ENCODE measurements at regions of chr4 and their contacts with region 1.

Region 1: DNA sequence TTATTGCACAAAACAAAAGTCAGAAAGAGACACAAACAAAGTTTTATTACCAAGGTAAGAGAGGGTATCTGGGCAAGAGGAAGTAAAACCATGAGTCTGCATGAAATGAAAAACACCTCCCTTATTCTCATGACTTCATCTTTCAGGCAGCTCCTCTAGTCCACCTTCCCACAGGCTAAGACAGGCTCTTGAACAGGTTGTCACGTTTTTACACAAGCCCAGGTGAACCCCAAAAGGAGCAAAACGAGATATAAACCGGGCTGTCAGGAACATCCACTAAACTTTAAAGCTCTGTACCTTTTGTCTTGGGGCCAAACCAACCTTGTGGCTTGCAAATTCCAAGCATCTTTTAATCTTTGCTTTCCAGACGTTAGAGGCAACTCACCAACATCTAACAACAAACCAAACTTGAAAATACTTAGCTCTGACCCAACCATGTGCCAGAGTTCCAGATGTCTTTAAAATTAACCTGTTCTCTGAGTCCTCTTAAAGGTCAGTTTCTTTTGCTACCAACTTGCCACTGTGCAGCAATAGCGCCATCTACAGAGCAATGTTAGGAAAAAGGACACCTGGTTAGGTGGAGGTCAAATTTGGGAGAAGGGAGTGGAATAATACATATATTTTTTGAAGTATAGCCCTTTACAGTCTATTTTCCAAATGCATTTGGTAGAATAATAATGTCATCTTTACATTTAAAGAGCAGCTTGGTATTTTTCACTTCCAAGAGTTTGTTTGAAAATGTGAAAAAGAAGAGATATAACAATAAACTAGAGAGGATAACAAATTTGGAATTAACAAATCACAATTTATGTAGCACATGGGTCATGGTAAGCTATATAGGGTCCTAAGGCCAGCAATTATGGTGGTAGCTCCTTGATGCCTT is 73.1 kb downstream of the QRFPR start:
- DNase-seq: peak in 7 of 9 donors; percentile 10 to 52 (median 33)
- ATAC-seq: peak; percentile 70
- H3K4me3 ChIP-seq: no peak overlapping the region
- H3K4me3 Mint-ChIP-seq: no peak overlapping the region
- H3K27ac ChIP-seq: no peak overlapping the region
- H3K27ac Mint-ChIP-seq: peak overlapping the region in 1 of 9 donors; percentile 39
- H3K4me1 ChIP-seq: peaks cover 0 to 9% of the 10 kb centered on the region in 2 donors
- H3K4me1 Mint-ChIP-seq: peaks cover 3 to 19% (median 15%) of the 10 kb centered on the region in 7 donors
- H3K27me3 ChIP-seq: no peaks in the 10 kb centered on the region
- H3K27me3 Mint-ChIP-seq: peaks cover 0 to 17% (median 0%) of the 10 kb centered on the region in 5 donors

Region 2: DNA sequence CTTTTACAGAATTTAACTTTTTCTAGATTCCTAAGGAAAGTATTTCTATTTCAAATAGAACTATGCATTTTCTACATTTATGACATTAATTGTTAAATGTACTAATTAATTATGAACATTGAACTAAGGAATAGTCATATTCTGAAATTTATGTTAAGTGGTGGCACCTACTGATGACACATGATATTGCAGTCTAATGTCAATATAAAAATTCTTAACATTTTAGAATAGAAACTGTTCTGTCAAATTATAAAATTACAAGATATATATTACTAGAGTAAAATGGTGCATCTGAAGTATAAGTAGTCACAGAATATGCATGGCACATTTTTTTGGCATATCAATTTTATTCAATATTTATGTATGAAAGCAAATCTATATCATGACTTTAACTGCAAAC is 195.2 kb before region 1 on chr4:
- CTCF ChIA-PET with region 1: no interaction called
- POLR2A ChIA-PET with region 1: no interaction called
- intact Hi-C with region 1: loop called in 1 of 2 experiments (anchors 5 kb)
- DNase-seq: no peak
- ATAC-seq: no peak
- H3K4me3 ChIP-seq: no peak overlapping the region
- H3K4me3 Mint-ChIP-seq: no peak overlapping the region
- H3K27ac ChIP-seq: no peak overlapping the region
- H3K27ac Mint-ChIP-seq: no peak overlapping the region
- H3K4me1 ChIP-seq: peaks cover 0 to 3% of the 10 kb centered on the region in 2 donors
- H3K4me1 Mint-ChIP-seq: peaks cover 0 to 25% (median 20%) of the 10 kb centered on the region in 7 donors
- H3K27me3 ChIP-seq: no peaks in the 10 kb centered on the region
- H3K27me3 Mint-ChIP-seq: peaks cover 0 to 29% (median 0%) of the 10 kb centered on the region in 5 donors

Region 3: DNA sequence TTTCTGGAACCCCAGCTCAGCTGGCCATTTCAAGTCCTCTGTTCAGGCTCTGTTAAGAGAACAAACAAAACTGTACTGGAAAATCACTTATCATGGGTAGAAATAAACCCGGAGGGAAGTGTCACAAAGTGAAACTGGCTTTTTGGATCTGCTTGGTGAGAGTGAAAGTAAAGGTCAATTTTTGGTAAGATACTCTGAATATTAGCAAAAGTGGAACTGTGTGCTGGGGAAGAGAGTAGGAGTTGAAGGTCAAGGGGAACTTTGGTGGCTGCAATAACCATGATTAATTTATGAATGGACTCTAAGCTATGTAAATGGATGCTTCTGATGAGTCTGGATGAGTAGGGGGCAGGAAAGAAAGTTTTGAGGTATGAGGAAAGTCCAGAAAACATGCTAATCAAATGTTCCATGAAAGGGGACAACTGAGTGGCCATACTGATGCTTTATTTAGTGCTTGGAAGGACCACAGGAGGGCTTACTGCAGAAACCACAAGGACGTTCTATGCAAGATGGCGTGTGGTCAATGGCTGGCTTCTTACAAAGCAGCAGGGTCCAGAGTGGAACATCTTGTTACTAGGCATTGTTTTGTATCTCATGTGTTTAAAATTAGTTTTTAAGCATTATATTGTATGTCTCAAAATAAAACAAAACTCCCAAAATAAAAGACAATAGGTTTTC is 106.8 kb before region 1 on chr4:
- CTCF ChIA-PET with region 1: no interaction called
- POLR2A ChIA-PET with region 1: no interaction called
- intact Hi-C with region 1: no loop called
- DNase-seq: no peak
- ATAC-seq: peak; percentile 41
- H3K4me3 ChIP-seq: peak overlapping the region; percentile 18
- H3K4me3 Mint-ChIP-seq: peak overlapping the region in 8 of 10 donors; percentile 4 to 59 (median 32)
- H3K27ac ChIP-seq: no peak overlapping the region
- H3K27ac Mint-ChIP-seq: peak overlapping the region in 5 of 9 donors; percentile 24 to 85 (median 81)
- H3K4me1 ChIP-seq: peaks cover 7 to 26% of the 10 kb centered on the region in 2 donors
- H3K4me1 Mint-ChIP-seq: peaks cover 15 to 32% (median 26%) of the 10 kb centered on the region in 7 donors
- H3K27me3 ChIP-seq: no peaks in the 10 kb centered on the region
- H3K27me3 Mint-ChIP-seq: peaks cover 0 to 6% (median 0%) of the 10 kb centered on the region in 5 donors

Region 4: GRCh38 chr4:121321466-121321865 is 13.8 kb after region 1 on chr4:
- CTCF ChIA-PET with region 1: no interaction called
- POLR2A ChIA-PET with region 1: no interaction called
- intact Hi-C with region 1: no loop called
- DNase-seq: no peak
- ATAC-seq: no peak
- H3K4me3 ChIP-seq: no peak overlapping the region
- H3K4me3 Mint-ChIP-seq: no peak overlapping the region
- H3K27ac ChIP-seq: no peak overlapping the region
- H3K27ac Mint-ChIP-seq: no peak overlapping the region
- H3K4me1 ChIP-seq: no peaks in the 10 kb centered on the region
- H3K4me1 Mint-ChIP-seq: no peaks in the 10 kb centered on the region
- H3K27me3 ChIP-seq: peaks cover 0 to 5% of the 10 kb centered on the region in 2 donors
- H3K27me3 Mint-ChIP-seq: peaks cover 5 to 33% (median 22%) of the 10 kb centered on the region in 5 donors